PC-3 (cell line): ENCODE measurements at regions of chr15 and their contacts with region 1.

Region 1: DNA sequence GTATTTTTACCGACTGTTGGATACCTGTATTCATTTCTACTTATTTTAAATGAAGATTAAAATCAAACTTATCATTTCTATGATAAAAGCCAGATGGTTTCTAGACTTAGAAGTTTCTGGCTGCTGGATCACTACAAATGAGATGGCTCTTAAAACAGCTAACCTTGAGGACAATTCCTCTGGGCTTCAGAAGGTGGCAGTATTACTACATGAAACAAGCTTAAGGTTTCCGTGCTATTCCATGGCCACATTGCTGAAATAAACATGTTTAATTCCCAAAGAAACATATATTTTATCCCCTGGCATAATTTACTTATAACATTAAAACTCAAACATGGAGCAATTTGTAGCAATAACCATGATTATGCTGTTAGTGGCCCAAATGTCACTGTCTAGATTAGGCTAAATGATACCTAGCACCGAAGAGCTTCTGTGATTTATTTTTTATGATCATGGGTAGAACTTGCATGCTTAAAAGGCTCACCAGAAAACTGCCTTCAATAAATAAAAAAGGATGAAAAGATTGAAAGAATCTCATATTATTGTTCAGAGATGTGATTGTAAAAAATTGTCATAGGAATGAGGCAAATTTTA is 204.0 kb upstream of the NANOGP8 start:
- DNase-seq: peak; percentile 74
- ATAC-seq: peak; percentile 48
- H3K4me3 ChIP-seq: no peak overlapping the region
- H3K27ac ChIP-seq: no peak overlapping the region
- H3K4me1 ChIP-seq: peaks cover 16% of the 10 kb centered on the region
- H3K27me3 ChIP-seq: no peaks in the 10 kb centered on the region
- CTCF ChIP-seq: peak; percentile 92

Region 2: GRCh38 chr15:35078221-35078915 is 210.8 kb before region 1 on chr15:
- CTCF ChIA-PET with region 1: interaction called, 4 read pairs
- POLR2A ChIA-PET with region 1: no interaction called
- intact Hi-C with region 1: loop called (anchors 1 kb)
- DNase-seq: peak; percentile 71
- ATAC-seq: peak; percentile 84
- H3K4me3 ChIP-seq: no peak overlapping the region
- H3K27ac ChIP-seq: no peak overlapping the region
- H3K4me1 ChIP-seq: no peaks in the 10 kb centered on the region
- H3K27me3 ChIP-seq: no peaks in the 10 kb centered on the region
- CTCF ChIP-seq: peak; percentile 91

Region 3: DNA sequence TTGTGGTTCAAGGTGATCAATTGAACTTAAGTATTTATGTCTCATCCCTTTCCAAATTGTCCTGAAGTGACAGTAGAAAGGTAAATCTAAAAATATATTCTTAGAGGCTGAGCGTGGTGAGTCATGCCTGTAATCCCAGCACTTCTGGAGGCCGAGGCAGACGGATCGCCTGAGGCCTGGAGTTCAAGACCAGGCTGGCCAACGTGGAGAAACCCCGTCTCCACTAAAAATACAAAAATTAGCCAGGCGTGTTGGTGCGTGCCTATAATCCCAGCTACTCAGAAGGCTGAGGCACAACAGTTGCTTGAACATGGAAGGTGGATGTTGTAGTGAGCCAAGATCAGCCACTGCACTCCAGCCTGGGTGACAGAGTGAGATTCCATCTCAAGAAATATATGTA is 30.2 kb after region 1 on chr15:
- CTCF ChIA-PET with region 1: no interaction called
- POLR2A ChIA-PET with region 1: no interaction called
- intact Hi-C with region 1: no loop called
- DNase-seq: no peak
- ATAC-seq: no peak
- H3K4me3 ChIP-seq: no peak overlapping the region
- H3K27ac ChIP-seq: no peak overlapping the region
- H3K4me1 ChIP-seq: no peaks in the 10 kb centered on the region
- H3K27me3 ChIP-seq: no peaks in the 10 kb centered on the region
- CTCF ChIP-seq: no peak

Region 4: GRCh38 chr15:35437157-35437556 is 148.0 kb after region 1 on chr15:
- CTCF ChIA-PET with region 1: interaction called, 11 read pairs
- POLR2A ChIA-PET with region 1: interaction called, 4 read pairs
- intact Hi-C with region 1: no loop called
- DNase-seq: peak; percentile 37
- ATAC-seq: peak; percentile 46; the same call in 1 of the 2 replicates
- H3K4me3 ChIP-seq: no peak overlapping the region
- H3K27ac ChIP-seq: no peak overlapping the region
- H3K4me1 ChIP-seq: no peaks in the 10 kb centered on the region
- H3K27me3 ChIP-seq: no peaks in the 10 kb centered on the region
- CTCF ChIP-seq: peak; percentile 46

Region 5: DNA sequence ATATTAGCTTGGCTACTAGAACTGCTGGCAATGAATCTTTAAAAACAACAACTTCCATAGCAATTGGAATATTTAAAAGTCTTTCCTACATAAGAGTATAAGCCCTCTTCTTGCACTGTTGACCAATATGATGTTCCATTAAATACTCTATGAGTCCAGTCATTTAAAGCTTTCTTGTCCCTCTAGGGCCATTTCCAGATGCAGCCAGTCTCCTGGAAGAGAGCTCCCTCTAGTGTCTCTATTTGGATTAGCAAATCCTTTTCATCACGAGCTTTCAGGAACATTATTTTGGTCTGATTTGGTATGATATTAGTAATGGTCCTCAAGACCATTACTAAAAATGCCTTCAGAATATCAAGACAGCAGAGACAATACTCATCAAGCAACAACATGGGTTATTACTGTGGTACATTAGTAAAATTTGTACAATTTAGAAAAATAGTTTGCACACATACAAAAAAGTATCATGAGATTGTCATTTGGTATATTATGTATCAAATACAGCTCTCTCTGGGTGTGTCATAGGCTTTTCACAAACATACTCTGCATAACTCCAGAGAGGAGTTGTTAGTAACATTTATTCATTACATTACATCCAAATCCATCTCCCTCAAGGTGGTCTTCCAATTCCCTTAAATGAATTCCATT is 155.6 kb after region 1 on chr15:
- CTCF ChIA-PET with region 1: interaction called, 35 read pairs
- POLR2A ChIA-PET with region 1: interaction called, 7 read pairs
- intact Hi-C with region 1: loop called (anchors 1 kb)
- DNase-seq: peak; percentile 76
- ATAC-seq: peak; percentile 14
- H3K4me3 ChIP-seq: no peak overlapping the region
- H3K27ac ChIP-seq: no peak overlapping the region
- H3K4me1 ChIP-seq: peaks cover 31% of the 10 kb centered on the region
- H3K27me3 ChIP-seq: no peaks in the 10 kb centered on the region
- CTCF ChIP-seq: peak; percentile 93

Region 6: GRCh38 chr15:35519541-35520149 is 230.5 kb after region 1 on chr15:
- CTCF ChIA-PET with region 1: interaction called, 3 read pairs
- POLR2A ChIA-PET with region 1: no interaction called
- intact Hi-C with region 1: loop called (anchors 5 kb)
- DNase-seq: peak; percentile 69
- ATAC-seq: peak; percentile 81
- H3K4me3 ChIP-seq: no peak overlapping the region
- H3K27ac ChIP-seq: no peak overlapping the region
- H3K4me1 ChIP-seq: no peaks in the 10 kb centered on the region
- H3K27me3 ChIP-seq: no peaks in the 10 kb centered on the region
- CTCF ChIP-seq: peak; percentile 89

Region 7: DNA sequence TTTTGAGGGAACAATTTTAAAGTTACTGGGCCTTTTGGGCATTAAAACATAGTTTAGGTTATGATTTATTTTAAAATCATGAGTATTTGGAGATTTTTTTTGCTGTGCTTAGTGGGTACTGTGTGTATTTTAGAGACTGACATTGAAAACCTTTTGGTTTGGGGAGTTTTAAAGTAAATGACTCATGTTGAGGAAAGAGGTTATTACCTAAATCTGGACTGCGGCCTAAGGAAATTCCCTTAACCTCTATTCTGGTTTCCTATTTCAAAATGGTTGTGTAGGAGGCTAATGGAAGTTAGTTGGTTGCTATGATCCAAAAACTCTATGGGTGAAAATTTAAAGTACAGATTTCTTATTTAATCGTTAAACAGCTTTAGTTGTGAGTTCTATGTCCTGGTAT is 314.2 kb after region 1 on chr15:
- CTCF ChIA-PET with region 1: no interaction called
- POLR2A ChIA-PET with region 1: no interaction called
- intact Hi-C with region 1: loop called (anchors 10 kb)
- DNase-seq: peak; percentile 65
- ATAC-seq: peak; percentile 86
- H3K4me3 ChIP-seq: no peak overlapping the region
- H3K27ac ChIP-seq: peak overlapping the region; percentile 35
- H3K4me1 ChIP-seq: peaks cover 13% of the 10 kb centered on the region
- H3K27me3 ChIP-seq: no peaks in the 10 kb centered on the region
- CTCF ChIP-seq: no peak